Stomach (tissue), 19 donors: ENCODE measurements at regions of chr1 and their contacts with region 1.

Region 1: GRCh38 chr1:151739590-151740375 is 18.5 kb downstream of the RIIAD1 start:
- DNase-seq: peak; percentile 59 to 60
- H3K4me3 ChIP-seq: no peak overlapping the region
- H3K27ac ChIP-seq: no peak overlapping the region
- H3K4me1 ChIP-seq: peaks cover 0 to 4% (median 0%) of the 10 kb centered on the region in 4 donors
- H3K27me3 ChIP-seq: no peaks in the 10 kb centered on the region
- CTCF ChIP-seq: no peak
- EP300 ChIP-seq: no peak
- POLR2A ChIP-seq: no peak

Region 2: GRCh38 chr1:151534665-151535278 is 205.0 kb before region 1 on chr1:
- intact Hi-C with region 1: loop called (anchors 5 kb)
- DNase-seq: peak; percentile 84 to 87
- H3K4me3 ChIP-seq: no peak overlapping the region
- H3K27ac ChIP-seq: no peak overlapping the region
- H3K4me1 ChIP-seq: peaks cover 8 to 11% (median 11%) of the 10 kb centered on the region in 4 donors
- H3K27me3 ChIP-seq: no peaks in the 10 kb centered on the region
- CTCF ChIP-seq: peak in 5 of 7 experiments; percentile 67 to 87 (median 76)
- EP300 ChIP-seq: no peak
- POLR2A ChIP-seq: no peak